CD8-positive, alpha-beta T cell (primary cell): ENCODE measurements at regions of chr7 and their contacts with region 1.

Region 1: DNA sequence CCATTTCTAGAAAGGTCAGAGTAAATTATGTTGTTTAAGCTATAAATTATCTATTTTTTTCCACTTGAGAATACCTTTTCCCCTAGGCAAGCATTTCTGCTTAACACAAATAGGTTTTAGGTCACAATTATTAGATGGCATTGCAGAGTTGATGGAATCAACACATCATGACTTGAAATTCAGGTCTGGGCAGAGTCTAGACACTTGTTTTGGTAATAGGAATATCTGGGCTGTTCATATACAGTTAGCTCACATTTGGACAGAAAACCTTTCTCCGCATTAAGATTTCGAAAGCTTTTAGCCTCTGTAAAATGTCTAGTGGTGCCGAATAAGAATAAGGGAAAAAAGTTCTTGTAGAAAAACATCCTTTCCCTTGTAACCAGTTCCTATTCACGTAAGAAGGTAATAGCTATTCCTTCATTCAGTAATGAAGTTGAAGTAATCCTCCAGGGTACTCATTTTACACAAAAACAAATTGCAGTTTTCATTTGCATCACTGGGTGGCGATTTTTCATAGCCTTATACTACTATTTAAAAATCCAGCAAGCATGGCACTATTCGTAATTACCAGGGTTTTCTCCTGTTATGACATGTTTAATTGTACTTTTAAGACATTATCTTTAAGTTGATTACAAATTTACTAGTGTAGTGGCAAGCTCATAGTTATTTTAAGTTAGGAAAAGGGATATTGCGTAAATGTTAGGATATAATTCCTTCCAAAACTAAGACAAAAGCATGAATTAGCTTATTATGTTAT is 37.0 kb downstream of the RPA3 start:
- DNase-seq: peak in 6 of 9 experiments; percentile 6 to 76 (median 41)
- ATAC-seq: peak; percentile 84
- H3K4me3 ChIP-seq: no peak overlapping the region
- H3K4me3 Mint-ChIP-seq: no peak overlapping the region
- H3K27ac ChIP-seq: peak overlapping the region in 1 of 2 experiments; percentile 2
- H3K27ac Mint-ChIP-seq: peak overlapping the region; percentile 70
- H3K4me1 ChIP-seq: peaks cover 14% of the 10 kb centered on the region
- H3K4me1 Mint-ChIP-seq: peaks cover 36% of the 10 kb centered on the region
- H3K27me3 ChIP-seq: no peaks in the 10 kb centered on the region
- H3K27me3 Mint-ChIP-seq: no peaks in the 10 kb centered on the region
- CTCF ChIP-seq: peak; percentile 81

Region 2: GRCh38 chr7:7566651-7567611 is 114.4 kb before region 1 on chr7 and contains the start of gene MIOS:
- CTCF ChIA-PET with region 1: no interaction called
- POLR2A ChIA-PET with region 1: no interaction called
- intact Hi-C with region 1: no loop called
- DNase-seq: peak; percentile 65 to 92 (median 77)
- ATAC-seq: peak; percentile 90
- H3K4me3 ChIP-seq: peak within 1 kb of the TSS; percentile 62 to 73
- H3K4me3 Mint-ChIP-seq: peak within 1 kb of the TSS; percentile 78
- H3K27ac ChIP-seq: peak within 1 kb of the TSS; percentile 83
- H3K27ac Mint-ChIP-seq: peak within 1 kb of the TSS; percentile 92
- H3K4me1 ChIP-seq: peaks cover 34% of the 10 kb centered on the region
- H3K4me1 Mint-ChIP-seq: peaks cover 35% of the 10 kb centered on the region
- H3K27me3 ChIP-seq: no peaks in the 10 kb centered on the region
- H3K27me3 Mint-ChIP-seq: no peaks in the 10 kb centered on the region
- CTCF ChIP-seq: no peak
- total RNA-seq, gene MIOS: 35.1 to 36.8 TPM

Region 3: DNA sequence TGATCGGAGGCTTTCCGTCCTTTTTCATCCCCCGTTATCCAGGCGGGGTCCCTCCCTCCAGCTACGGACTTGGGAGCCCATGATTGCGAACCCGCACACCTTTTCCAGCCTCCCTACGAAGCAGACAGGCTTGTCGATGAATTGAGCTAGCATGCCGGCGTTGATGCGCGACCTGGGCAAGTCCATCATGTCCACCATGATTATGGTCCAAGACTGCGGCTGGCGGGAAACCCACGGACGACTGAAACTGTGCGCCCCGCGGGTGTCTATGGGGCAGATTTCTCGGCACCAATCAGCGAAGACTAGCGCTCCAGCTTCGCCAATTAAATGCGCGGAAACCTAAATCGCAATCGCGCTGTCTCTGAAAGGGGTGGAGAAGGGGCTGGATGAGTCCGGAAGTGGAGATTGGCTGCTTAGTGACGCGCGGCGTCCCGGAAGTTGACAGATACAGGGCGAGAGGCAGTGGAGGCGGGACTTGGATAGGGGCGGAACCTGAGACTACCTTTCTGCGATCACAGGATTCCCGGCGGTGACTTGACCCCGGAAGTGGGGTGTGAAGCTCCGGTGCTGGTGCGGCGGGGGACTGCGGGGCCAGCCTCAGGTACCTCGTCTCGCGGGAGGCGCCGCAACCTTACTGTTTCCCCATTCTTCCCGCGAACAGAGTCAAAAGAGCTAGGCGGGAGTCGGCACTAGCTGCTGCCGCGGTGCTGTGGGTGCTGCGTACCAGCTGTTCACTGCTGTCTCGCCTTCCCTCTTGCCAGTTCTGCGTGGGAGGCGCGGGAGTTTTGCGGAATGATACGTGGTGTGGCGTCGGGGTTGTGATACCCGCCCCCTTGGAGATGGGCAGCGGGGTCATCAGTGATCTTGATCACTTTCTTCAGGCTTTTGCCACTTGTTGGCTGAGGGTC is 40.9 kb before region 1 on chr7 and contains the start of gene UMAD1:
- CTCF ChIA-PET with region 1: interaction called, 8 read pairs
- POLR2A ChIA-PET with region 1: interaction called, 19 read pairs
- intact Hi-C with region 1: loop called in 1 of 2 experiments (anchors 5 kb)
- DNase-seq: peak; percentile 96 to 100 (median 98)
- ATAC-seq: peak; percentile 87
- H3K4me3 ChIP-seq: peak within 1 kb of the TSS; percentile 84 to 94
- H3K4me3 Mint-ChIP-seq: peak within 1 kb of the TSS; percentile 97
- H3K27ac ChIP-seq: peak within 1 kb of the TSS; percentile 96 to 97
- H3K27ac Mint-ChIP-seq: peak within 1 kb of the TSS; percentile 96
- H3K4me1 ChIP-seq: peaks cover 22% of the 10 kb centered on the region
- H3K4me1 Mint-ChIP-seq: peaks cover 46% of the 10 kb centered on the region
- H3K27me3 ChIP-seq: no peaks in the 10 kb centered on the region
- H3K27me3 Mint-ChIP-seq: no peaks in the 10 kb centered on the region
- CTCF ChIP-seq: no peak
- total RNA-seq, gene UMAD1: 11.1 to 11.2 TPM

Region 4: GRCh38 chr7:7707806-7708205 is 26.4 kb after region 1 on chr7:
- CTCF ChIA-PET with region 1: no interaction called
- POLR2A ChIA-PET with region 1: no interaction called
- intact Hi-C with region 1: no loop called
- DNase-seq: no peak
- ATAC-seq: no peak
- H3K4me3 ChIP-seq: no peak overlapping the region
- H3K4me3 Mint-ChIP-seq: no peak overlapping the region
- H3K27ac ChIP-seq: no peak overlapping the region
- H3K27ac Mint-ChIP-seq: no peak overlapping the region
- H3K4me1 ChIP-seq: no peaks in the 10 kb centered on the region
- H3K4me1 Mint-ChIP-seq: peaks cover 25% of the 10 kb centered on the region
- H3K27me3 ChIP-seq: no peaks in the 10 kb centered on the region
- H3K27me3 Mint-ChIP-seq: no peaks in the 10 kb centered on the region
- CTCF ChIP-seq: no peak

Region 5: GRCh38 chr7:7761340-7761980 is 80.1 kb after region 1 on chr7:
- CTCF ChIA-PET with region 1: interaction called, 29 read pairs
- POLR2A ChIA-PET with region 1: interaction called, 3 read pairs
- intact Hi-C with region 1: loop called (anchors 1 to 2 kb)
- DNase-seq: peak in 2 of 9 experiments; percentile 61 to 68
- ATAC-seq: peak; percentile 24
- H3K4me3 ChIP-seq: peak overlapping the region; percentile 49 to 52
- H3K4me3 Mint-ChIP-seq: peak overlapping the region; percentile 93
- H3K27ac ChIP-seq: peak overlapping the region; percentile 52 to 80
- H3K27ac Mint-ChIP-seq: peak overlapping the region; percentile 98
- H3K4me1 ChIP-seq: peaks cover 29% of the 10 kb centered on the region
- H3K4me1 Mint-ChIP-seq: peaks cover 46% of the 10 kb centered on the region
- H3K27me3 ChIP-seq: no peaks in the 10 kb centered on the region
- H3K27me3 Mint-ChIP-seq: no peaks in the 10 kb centered on the region
- CTCF ChIP-seq: peak; percentile 46

Region 6: GRCh38 chr7:8035647-8036518 is 354.5 kb after region 1 on chr7:
- CTCF ChIA-PET with region 1: interaction called, 19 read pairs
- POLR2A ChIA-PET with region 1: no interaction called
- intact Hi-C with region 1: loop called (anchors 1 to 5 kb)
- DNase-seq: peak in 4 of 9 experiments; percentile 5 to 71 (median 56)
- ATAC-seq: peak; percentile 92
- H3K4me3 ChIP-seq: no peak overlapping the region
- H3K4me3 Mint-ChIP-seq: no peak overlapping the region
- H3K27ac ChIP-seq: peak overlapping the region in 1 of 2 experiments; percentile 40
- H3K27ac Mint-ChIP-seq: peak overlapping the region; percentile 58
- H3K4me1 ChIP-seq: peaks cover 5% of the 10 kb centered on the region
- H3K4me1 Mint-ChIP-seq: peaks cover 26% of the 10 kb centered on the region
- H3K27me3 ChIP-seq: no peaks in the 10 kb centered on the region
- H3K27me3 Mint-ChIP-seq: no peaks in the 10 kb centered on the region
- CTCF ChIP-seq: peak; percentile 55

Region 7: GRCh38 chr7:8190119-8190895 is 508.9 kb after region 1 on chr7:
- CTCF ChIA-PET with region 1: interaction called, 33 read pairs
- POLR2A ChIA-PET with region 1: interaction called, 5 read pairs
- intact Hi-C with region 1: loop called (anchors 1 kb)
- DNase-seq: peak; percentile 32 to 84 (median 70)
- ATAC-seq: peak; percentile 86
- H3K4me3 ChIP-seq: no peak overlapping the region
- H3K4me3 Mint-ChIP-seq: no peak overlapping the region
- H3K27ac ChIP-seq: no peak overlapping the region
- H3K27ac Mint-ChIP-seq: no peak overlapping the region
- H3K4me1 ChIP-seq: no peaks in the 10 kb centered on the region
- H3K4me1 Mint-ChIP-seq: peaks cover 16% of the 10 kb centered on the region
- H3K27me3 ChIP-seq: no peaks in the 10 kb centered on the region
- H3K27me3 Mint-ChIP-seq: peaks cover 5% of the 10 kb centered on the region
- CTCF ChIP-seq: peak; percentile 89

Region 8: DNA sequence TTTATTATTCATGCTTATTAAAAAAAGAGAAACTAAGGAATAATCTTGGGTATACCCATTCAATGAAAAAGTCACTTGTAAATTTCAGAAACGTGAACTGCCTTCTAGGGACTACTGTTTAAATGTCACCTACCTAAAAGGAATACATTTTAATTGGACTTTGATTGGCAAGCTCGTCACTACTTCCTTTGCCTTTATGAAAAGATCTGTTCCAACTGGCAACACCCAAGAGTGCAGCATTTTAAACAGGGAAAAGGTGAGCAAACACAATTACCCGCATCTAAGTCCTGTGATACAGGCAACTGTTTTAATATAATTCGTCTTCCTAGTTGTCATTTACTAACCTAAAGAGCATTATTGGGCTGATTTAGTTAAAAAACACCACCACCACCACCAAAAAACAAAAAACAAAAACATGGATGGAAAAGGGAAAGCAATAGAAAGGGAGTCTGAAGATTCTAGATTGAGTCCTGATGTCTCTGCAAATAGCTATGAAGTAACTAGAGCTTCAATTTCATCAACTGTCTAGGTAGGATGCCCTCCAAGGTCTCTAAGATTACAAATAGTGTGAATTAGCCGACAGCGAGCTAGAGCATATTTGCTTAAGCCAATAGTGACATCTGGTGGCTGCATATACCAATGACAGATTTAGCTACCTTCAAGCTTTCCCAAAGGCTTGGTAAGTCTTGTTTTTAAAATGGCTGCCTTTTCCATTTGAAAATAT is 614.4 kb after region 1 on chr7:
- CTCF ChIA-PET with region 1: interaction called, 9 read pairs
- POLR2A ChIA-PET with region 1: no interaction called
- intact Hi-C with region 1: loop called in 1 of 2 experiments (anchors 2 kb)
- DNase-seq: peak in 6 of 9 experiments; percentile 7 to 81 (median 22)
- ATAC-seq: peak; percentile 78
- H3K4me3 ChIP-seq: no peak overlapping the region
- H3K4me3 Mint-ChIP-seq: no peak overlapping the region
- H3K27ac ChIP-seq: no peak overlapping the region
- H3K27ac Mint-ChIP-seq: no peak overlapping the region
- H3K4me1 ChIP-seq: no peaks in the 10 kb centered on the region
- H3K4me1 Mint-ChIP-seq: no peaks in the 10 kb centered on the region
- H3K27me3 ChIP-seq: no peaks in the 10 kb centered on the region
- H3K27me3 Mint-ChIP-seq: peaks cover 11% of the 10 kb centered on the region
- CTCF ChIP-seq: peak; percentile 67

Region 9: DNA sequence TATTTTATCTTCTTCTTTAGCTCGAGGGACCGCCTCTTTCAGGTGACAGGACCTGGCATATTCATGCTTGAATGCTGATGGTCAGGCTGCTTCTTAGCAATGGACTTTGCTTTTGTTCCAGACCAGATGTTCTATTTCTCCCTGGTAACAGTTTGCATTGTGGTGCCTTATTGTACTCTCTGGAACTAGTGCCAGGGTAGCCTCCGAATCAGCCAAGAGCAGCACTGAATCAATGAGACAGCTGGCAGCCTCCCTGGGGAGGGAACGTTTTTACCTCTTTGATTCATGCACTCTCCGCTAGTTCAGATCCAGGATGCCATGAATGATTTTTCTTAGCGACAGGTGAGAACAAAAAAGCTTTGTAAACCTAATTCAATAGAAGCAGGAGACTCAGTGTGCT is 697.9 kb after region 1 on chr7:
- CTCF ChIA-PET with region 1: no interaction called
- POLR2A ChIA-PET with region 1: no interaction called
- intact Hi-C with region 1: no loop called
- DNase-seq: no peak
- ATAC-seq: no peak
- H3K4me3 ChIP-seq: no peak overlapping the region
- H3K4me3 Mint-ChIP-seq: no peak overlapping the region
- H3K27ac ChIP-seq: no peak overlapping the region
- H3K27ac Mint-ChIP-seq: no peak overlapping the region
- H3K4me1 ChIP-seq: no peaks in the 10 kb centered on the region
- H3K4me1 Mint-ChIP-seq: no peaks in the 10 kb centered on the region
- H3K27me3 ChIP-seq: no peaks in the 10 kb centered on the region
- H3K27me3 Mint-ChIP-seq: peaks cover 14% of the 10 kb centered on the region
- CTCF ChIP-seq: no peak